ENCODE measurements at regions of chr6 and their contacts with region 1.

Region 1: DNA sequence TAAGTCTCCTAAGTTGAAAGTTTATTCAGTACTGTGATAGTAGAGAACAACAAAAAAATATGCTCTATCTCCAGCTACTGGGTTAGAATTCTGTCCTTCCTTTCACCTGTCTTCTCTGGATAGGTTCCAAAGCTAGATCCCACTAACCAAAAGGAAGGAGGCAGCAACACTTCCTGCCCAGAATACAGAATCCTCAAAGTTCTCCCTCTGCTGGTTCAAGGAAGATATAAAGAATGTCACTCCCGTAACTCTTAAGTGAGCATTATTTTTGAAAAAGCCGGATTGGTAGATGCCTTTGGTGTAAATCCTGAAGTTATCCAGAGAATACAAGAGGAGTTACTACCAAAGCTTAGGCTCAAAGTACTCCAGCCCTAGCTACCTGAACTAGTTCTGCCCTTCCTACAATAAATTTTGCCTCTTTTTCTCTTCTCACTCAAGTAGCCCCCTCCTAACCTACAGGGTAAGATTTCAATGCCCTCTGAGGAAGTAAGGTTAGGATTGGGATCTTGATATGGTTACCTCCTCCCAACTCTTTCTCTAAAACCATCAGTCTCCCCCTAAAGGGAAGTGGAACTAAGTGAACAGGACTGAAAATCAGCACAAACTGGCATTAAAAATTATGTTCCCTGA is 26.0 kb upstream of the CRIP3 start:
- DNase-seq: peak in 1 of 3 donors; percentile 20
- ATAC-seq: peak; percentile 82
- H3K4me3 ChIP-seq: no peak overlapping the region
- H3K4me1 ChIP-seq: peaks cover 7% of the 10 kb centered on the region
- CTCF ChIP-seq: peak; percentile 26

Region 2: DNA sequence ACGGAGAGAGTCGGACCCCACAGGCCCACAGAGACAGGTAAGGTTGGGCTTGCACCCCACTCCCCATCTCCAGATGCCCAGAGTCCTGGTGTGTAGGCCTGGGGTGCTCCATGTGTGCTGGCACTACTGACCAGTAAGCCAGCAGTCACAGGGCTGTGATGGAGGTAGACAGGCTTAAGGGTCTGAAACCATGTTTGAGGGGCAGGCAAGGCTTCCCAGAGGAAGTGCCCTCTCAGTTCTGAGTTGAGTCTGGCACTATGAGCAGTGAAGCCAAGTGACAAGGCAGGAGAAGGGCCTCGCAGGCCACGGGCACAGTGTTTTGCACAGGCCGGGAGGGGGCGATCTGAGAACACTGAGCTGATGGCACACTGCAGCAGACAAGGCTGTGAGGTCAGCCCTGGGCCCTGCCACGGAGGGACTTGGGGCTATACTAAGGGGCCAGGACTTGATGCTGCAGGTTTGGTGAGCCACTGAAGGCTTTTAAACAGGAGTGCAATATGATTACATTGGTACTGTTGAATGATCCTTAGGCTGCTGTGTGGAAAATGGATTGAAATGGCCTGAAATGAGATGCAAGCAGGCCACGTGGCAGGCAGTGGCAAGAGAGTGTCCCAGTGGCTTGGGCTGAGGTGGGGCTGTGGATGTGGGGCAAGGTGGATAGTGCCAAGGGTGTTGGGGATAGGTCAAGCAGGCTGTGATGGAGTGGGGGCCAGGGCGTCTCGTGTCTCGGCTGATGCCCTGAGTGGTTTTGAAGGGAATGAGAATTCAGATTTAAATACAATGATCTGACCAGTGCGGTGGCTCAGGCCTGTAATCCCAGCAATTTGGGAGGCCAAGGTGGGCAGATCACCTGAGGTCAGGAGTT is 71.0 kb before region 1 on chr6:
- intact Hi-C with region 1: loop called (anchors 5 to 10 kb)
- DNase-seq: peak; percentile 81 to 91 (median 87)
- ATAC-seq: peak; percentile 87
- H3K4me3 ChIP-seq: no peak overlapping the region
- H3K4me1 ChIP-seq: peaks cover 15% of the 10 kb centered on the region
- CTCF ChIP-seq: peak; percentile 78

Region 3: GRCh38 chr6:43943781-43944250 is 609.2 kb after region 1 on chr6:
- intact Hi-C with region 1: no loop called
- DNase-seq: no peak
- ATAC-seq: no peak
- H3K4me3 ChIP-seq: no peak overlapping the region
- H3K4me1 ChIP-seq: no peaks in the 10 kb centered on the region
- CTCF ChIP-seq: no peak